ENCODE measurements at regions of chr3 and their contacts with region 1.

Region 1: DNA sequence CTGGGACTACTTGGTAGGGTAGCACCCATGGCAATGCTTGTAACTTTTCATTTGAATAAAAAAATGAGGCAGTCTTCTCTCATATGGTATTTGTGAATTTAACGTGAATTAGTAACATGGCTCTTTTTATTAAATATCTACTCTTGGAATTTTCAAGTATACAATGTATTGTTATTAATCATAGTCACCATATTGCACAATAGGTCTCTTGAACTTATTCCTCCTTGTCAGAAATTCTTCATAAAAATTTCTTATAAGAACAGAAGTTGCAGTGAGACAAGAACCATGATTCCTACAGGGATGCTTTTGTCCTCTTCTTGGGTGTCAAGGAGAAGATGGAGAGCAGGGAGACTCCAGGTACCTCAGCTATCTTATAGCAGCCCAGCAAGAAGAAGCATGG is 203.8 kb upstream of the FEZF2 start:
- DNase-seq: no peak
- H3K4me3 ChIP-seq: no peak overlapping the region
- H3K27ac ChIP-seq: no peak overlapping the region
- H3K4me1 ChIP-seq: no peaks in the 10 kb centered on the region
- H3K27me3 ChIP-seq: no peaks in the 10 kb centered on the region
- CTCF ChIP-seq: no peak
- POLR2A ChIP-seq: no peak

Region 2: DNA sequence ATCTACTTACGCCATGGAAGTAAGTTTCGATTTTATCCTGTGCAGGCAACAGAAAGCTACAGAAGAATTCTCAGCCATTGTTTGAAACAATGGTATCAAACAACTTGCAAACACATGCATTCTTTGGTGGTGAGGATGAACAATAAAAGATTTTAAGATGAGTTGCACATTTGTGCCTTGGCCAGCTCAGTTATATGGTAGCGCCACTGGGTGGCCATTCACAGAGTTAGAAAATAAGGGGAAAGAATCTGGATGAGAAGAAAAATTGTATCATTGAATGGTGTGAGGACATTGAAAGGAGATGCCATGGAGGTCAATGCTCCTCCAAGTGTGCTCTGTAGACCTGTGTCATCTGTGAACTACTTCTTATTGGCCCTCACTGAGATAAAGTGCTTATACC is 286.5 kb after region 1 on chr3:
- intact Hi-C with region 1: loop called (anchors 5 kb)
- DNase-seq: no peak
- H3K4me3 ChIP-seq: no peak overlapping the region
- H3K27ac ChIP-seq: no peak overlapping the region
- H3K4me1 ChIP-seq: no peaks in the 10 kb centered on the region
- H3K27me3 ChIP-seq: peaks cover 0 to 3% of the 10 kb centered on the region in 2 donors
- CTCF ChIP-seq: no peak
- POLR2A ChIP-seq: no peak